Panc1 (cell line): ENCODE measurements at regions of chr19 and their contacts with region 1.

Region 1: DNA sequence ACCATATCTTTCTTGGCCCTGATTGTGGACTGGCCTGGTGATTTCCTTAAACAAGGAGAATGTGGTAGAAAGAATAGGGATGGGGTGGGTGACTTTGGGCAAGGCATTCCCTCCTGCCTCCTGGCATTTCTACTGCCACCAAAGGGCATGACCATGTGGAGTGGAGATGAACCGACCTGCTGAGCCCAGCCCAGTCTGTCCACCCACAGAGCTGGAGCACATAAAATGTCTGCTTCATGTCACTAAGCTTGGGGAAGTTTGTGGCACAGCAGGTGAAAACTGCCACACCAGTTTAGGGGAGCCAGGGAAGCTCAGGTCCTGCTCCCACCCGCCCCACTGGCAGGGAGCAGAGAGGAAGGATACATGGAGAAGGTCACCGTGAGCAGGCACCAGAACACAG is 6.3 kb downstream of the TMEM161A start:
- DNase-seq: no peak
- ATAC-seq: no peak
- H3K4me3 ChIP-seq: no peak overlapping the region
- H3K27ac ChIP-seq: no peak overlapping the region
- H3K4me1 ChIP-seq: no peaks in the 10 kb centered on the region
- H3K27me3 ChIP-seq: no peaks in the 10 kb centered on the region
- CTCF ChIP-seq: no peak

Region 2: GRCh38 chr19:19053508-19054314 is 78.3 kb before region 1 on chr19:
- CTCF ChIA-PET with region 1: interaction called, 12 read pairs
- POLR2A ChIA-PET with region 1: no interaction called
- in situ Hi-C with region 1: no loop called
- intact Hi-C with region 1: no loop called
- DNase-seq: no peak
- ATAC-seq: peak; percentile 54; the same call in 1 of the 2 replicates
- H3K4me3 ChIP-seq: no peak overlapping the region
- H3K27ac ChIP-seq: no peak overlapping the region
- H3K4me1 ChIP-seq: no peaks in the 10 kb centered on the region
- H3K27me3 ChIP-seq: no peaks in the 10 kb centered on the region
- CTCF ChIP-seq: peak; percentile 81